ENCODE measurements at regions of chr3 and their contacts with region 1.

Region 1: DNA sequence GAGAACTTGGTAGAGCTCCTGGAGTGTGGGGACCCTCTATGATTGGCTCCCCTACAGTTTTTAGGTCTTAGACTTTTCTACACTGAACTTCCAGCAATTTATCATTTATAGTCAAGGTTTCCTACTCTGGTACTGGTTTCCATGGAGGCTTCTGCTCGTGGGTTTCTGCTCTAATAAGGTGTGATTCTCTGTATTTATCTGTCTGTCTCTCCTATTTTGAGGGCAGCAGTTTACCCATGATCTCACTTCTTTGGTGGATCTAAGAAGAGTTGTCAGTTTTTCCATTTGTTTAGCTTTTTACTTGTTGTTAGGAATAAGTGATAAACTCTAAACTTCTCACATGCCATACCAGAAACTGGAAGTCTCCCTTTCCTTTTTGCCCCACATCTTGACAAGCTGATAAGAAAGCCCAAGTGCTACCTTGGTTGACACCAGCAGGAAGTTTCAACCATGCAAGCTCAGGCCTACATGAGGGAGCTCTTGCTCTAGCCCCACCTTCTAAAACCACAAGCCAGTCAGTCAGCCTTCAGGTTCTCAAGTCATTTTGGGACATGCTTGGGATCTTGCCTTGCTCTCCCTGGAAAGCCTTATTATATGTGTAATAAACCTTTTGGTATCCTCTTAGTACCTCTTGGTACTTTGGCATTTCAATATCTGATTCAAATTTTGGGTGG is 10.0 kb downstream of the TIMMDC1 start:
- DNase-seq: peak; percentile 79
- H3K4me3 Mint-ChIP-seq: peak overlapping the region; percentile 41
- H3K27ac Mint-ChIP-seq: peak overlapping the region; percentile 90
- H3K4me1 Mint-ChIP-seq: peaks cover 40% of the 10 kb centered on the region
- H3K27me3 Mint-ChIP-seq: no peaks in the 10 kb centered on the region

Region 2: GRCh38 chr3:119293871-119294695 is 214.2 kb before region 1 on chr3 and contains the start of gene ARHGAP31:
- intact Hi-C with region 1: loop called (anchors 1 kb)
- DNase-seq: peak; percentile 95
- H3K4me3 Mint-ChIP-seq: peak within 1 kb of the TSS; percentile 86
- H3K27ac Mint-ChIP-seq: peak within 1 kb of the TSS; percentile 89
- H3K4me1 Mint-ChIP-seq: peaks cover 37% of the 10 kb centered on the region
- H3K27me3 Mint-ChIP-seq: peaks cover 14% of the 10 kb centered on the region
- total RNA-seq, gene ARHGAP31: 9.5 and 11.0 TPM in 2 replicates

Region 3: DNA sequence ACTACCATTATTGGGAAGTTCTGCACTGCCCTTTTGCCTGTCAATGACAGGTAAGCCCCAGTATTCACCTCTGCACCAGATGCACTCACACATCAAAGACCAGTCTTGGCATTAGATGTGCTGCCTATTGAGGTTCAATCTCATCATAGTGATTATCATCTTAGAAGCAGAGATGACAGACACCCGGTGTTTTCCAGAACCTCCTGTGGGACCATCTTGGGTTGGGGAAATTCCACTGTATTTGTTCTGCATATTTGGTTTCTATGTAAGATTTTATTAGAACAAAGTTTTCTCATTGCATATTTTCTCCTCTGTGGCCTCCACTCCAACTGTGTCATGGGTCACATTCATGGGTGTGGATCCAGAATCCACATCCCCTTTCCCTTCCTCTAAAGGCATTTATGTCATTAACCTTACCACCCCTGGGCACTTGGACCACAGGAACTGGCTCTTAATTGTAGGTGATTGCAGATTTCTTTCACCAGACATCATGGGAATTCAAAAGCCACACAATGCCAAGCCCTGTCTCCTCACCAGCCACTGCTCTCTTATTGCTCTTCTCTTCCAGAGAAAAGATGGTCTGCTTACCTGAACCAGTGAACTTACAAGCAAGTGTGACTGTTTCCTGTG is 120.6 kb after region 1 on chr3:
- intact Hi-C with region 1: loop called (anchors 1 kb)
- DNase-seq: no peak
- H3K4me3 Mint-ChIP-seq: no peak overlapping the region
- H3K27ac Mint-ChIP-seq: peak overlapping the region; percentile 48
- H3K4me1 Mint-ChIP-seq: peaks cover 31% of the 10 kb centered on the region
- H3K27me3 Mint-ChIP-seq: no peaks in the 10 kb centered on the region

Region 4: GRCh38 chr3:119702530-119703157 is 194.3 kb after region 1 on chr3 and contains the start of gene CFAP91:
- intact Hi-C with region 1: loop called (anchors 2 kb)
- DNase-seq: peak; percentile 94
- H3K4me3 Mint-ChIP-seq: peak within 1 kb of the TSS; percentile 83
- H3K27ac Mint-ChIP-seq: peak within 1 kb of the TSS; percentile 40
- H3K4me1 Mint-ChIP-seq: peaks cover 29% of the 10 kb centered on the region
- H3K27me3 Mint-ChIP-seq: peaks cover 27% of the 10 kb centered on the region
- total RNA-seq, gene CFAP91: 0.26 TPM in 1 of 2 replicates, not detected in the other

Measured in activated CD4-positive, alpha-beta T cell treated with anti-CD3 and anti-CD28 coated beads, Interleukin-2, amount 10 ng/mL, durations not matched to agents 24 days and 14 days (primary cell).